Ascending aorta (tissue), 2 donors: ENCODE measurements at regions of chr5 and their contacts with region 1.

Region 1: GRCh38 chr5:9207817-9208418 is 338.0 kb downstream of the SEMA5A start:
- DNase-seq: no peak
- H3K4me3 ChIP-seq: no peak overlapping the region
- H3K27ac ChIP-seq: no peak overlapping the region
- H3K4me1 ChIP-seq: no peaks in the 10 kb centered on the region
- H3K27me3 ChIP-seq: no peaks in the 10 kb centered on the region
- CTCF ChIP-seq: peak; percentile 9 to 47 (median 22)

Region 2: DNA sequence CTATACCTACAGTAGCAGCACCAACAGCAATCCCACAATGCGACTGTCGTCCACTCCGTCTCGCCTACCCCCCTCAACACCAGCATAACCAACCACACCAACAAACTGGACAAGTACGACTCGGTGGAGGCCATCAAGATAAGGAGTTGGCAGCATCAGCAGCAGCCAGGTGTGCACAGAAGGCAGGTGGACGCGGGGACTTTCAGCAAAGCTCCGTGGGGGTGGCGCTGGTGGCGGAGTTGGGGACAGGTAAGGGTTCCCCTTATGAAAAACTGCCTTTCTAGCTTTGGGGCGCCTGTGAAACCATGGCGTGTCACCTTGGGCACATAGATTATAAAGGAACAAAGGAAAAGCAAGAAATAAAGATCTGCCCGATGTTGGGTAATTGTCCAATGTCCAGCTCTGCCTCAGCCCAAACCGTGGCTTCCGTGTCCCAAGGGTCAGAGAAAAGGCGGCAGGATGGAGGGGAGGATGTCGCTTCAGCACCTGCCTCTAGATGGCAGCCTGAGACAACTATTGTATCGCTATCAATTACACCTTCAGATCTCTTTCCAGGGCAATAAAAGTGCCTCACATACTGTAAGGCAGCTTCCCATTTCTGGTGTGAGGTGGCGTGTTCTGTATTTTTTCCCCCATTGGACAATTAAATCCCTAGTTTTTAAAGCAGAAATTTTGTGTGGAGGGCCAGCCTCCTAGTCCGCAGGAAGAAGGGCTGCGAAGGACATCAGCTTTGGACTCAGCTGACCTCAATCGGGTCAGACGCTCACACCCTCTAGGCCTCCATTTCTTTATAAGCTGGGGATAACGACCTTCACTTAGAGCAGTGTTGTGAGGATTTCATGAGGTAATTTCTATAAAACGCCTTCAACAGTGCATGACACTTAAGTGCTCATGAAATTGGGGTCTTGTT is 1280.2 kb before region 1 on chr5:
- intact Hi-C with region 1: loop called (anchors 5 kb)
- DNase-seq: no peak
- H3K4me3 ChIP-seq: no peak overlapping the region
- H3K27ac ChIP-seq: no peak overlapping the region
- H3K4me1 ChIP-seq: no peaks in the 10 kb centered on the region
- H3K27me3 ChIP-seq: no peaks in the 10 kb centered on the region
- CTCF ChIP-seq: peak; percentile 11 to 58 (median 58)

Region 3: DNA sequence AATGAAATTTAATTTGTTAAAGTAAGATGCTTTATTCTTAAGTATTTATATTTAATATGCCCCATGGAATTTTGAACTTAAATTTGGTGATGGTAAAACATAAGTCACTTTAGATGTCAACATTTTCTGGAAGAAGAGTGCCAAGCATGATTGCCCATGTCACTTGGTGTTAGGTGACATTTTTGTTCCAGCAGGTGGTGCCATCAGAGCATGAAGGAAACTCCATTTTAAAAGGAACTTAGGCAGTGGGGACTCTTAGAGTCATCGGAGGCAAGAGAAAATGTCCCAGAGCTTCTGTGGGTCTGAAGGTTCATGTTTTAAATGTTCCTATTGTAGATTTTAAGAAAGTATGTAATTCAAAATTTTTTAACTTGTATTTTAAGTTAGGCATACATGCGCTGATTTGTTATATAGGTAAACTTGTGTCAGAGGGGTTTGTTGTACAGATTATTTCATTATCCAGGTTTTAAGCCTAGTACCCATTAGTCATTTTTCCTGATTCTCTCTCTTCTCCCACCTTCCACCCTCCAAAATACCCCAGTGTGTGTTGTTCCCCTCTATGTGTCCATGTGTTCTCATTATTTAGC is 451.3 kb before region 1 on chr5:
- intact Hi-C with region 1: loop called (anchors 5 kb)
- DNase-seq: no peak
- H3K4me3 ChIP-seq: no peak overlapping the region
- H3K27ac ChIP-seq: no peak overlapping the region
- H3K4me1 ChIP-seq: no peaks in the 10 kb centered on the region
- H3K27me3 ChIP-seq: no peaks in the 10 kb centered on the region
- CTCF ChIP-seq: peak in 2 of 3 experiments; percentile 18 to 45